Activated CD4-positive, alpha-beta T cell treated with anti-CD3 and anti-CD28 coated beads for 36 hours (primary cell): ENCODE measurements at regions of chr9 and their contacts with region 1.

Region 1: GRCh38 chr9:70639853-70640814 is 225.7 kb upstream of the KLF9 start:
- DNase-seq: no peak
- ATAC-seq: no peak
- H3K4me3 Mint-ChIP-seq: no peak overlapping the region
- H3K27ac Mint-ChIP-seq: no peak overlapping the region
- H3K4me1 Mint-ChIP-seq: no peaks in the 10 kb centered on the region
- H3K27me3 Mint-ChIP-seq: peaks cover 11% of the 10 kb centered on the region

Region 2: DNA sequence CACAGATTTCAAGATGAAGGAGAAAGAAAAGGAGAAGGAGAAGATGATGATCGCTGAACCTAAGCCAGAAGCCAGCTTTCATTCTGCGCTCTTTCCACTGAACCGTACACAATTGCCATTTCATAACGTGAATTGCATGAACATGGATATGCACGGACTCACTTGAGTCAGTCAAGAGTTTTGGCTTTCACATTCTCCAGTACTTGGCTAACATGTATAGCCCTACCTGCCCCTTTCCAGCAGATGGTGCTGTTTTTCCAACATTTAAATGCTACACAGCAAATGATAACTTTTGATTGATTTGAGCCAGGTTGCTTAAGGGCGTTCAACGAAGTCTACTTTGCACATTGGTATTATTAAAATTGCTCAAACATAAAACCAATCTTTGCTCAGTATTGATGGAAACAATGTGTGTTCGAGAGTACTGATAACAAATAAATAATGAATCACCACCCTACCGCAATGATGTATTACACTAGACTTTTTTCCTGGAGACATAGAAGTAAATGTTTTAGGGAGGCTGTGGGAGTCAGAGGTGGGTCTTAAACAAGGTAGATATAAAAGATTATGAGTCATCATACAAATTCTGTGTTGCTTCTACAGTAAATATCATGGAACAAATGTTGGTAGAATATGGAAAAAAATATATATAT is 284.9 kb after region 1 on chr9:
- CTCF ChIA-PET with region 1: interaction called, 3 read pairs
- POLR2A ChIA-PET with region 1: no interaction called
- intact Hi-C with region 1: loop called in 1 of 2 experiments (anchors 1 kb)
- DNase-seq: peak; percentile 24
- ATAC-seq: peak; percentile 66
- H3K4me3 Mint-ChIP-seq: no peak overlapping the region
- H3K27ac Mint-ChIP-seq: no peak overlapping the region
- H3K4me1 Mint-ChIP-seq: no peaks in the 10 kb centered on the region
- H3K27me3 Mint-ChIP-seq: no peaks in the 10 kb centered on the region

Region 3: DNA sequence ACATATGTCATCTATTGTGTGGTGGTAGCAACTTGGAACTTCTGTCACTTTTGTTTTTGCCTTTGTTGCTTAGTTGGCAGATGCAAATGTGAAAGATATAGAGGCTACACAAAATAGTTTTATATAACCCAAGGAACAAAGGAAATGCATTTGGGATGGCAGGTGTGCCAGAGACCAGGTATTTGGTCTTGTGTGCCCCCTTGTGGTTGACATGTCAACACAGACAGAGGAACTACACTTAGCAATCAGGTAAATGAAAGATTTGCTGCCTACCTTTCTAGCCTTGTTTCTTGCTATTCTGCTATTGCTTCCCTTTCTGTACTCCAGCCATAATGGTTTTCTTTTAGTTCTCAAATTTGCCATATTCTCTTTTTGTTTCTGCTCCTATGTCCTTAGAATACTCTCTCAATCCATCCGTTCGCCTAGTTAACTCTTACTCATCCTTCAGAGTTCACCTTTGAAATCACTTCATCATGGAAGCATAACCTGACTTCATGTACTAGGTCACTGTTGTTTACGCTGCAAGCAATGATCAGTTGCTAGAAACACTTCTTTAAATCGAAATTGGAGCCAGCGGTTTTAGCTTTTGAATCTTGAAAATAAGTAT is 361.7 kb after region 1 on chr9:
- CTCF ChIA-PET with region 1: interaction called, 5 read pairs
- POLR2A ChIA-PET with region 1: no interaction called
- intact Hi-C with region 1: loop called (anchors 1 to 5 kb)
- DNase-seq: peak; percentile 31
- ATAC-seq: no peak
- H3K4me3 Mint-ChIP-seq: no peak overlapping the region
- H3K27ac Mint-ChIP-seq: no peak overlapping the region
- H3K4me1 Mint-ChIP-seq: no peaks in the 10 kb centered on the region
- H3K27me3 Mint-ChIP-seq: peaks cover 3% of the 10 kb centered on the region

Region 4: DNA sequence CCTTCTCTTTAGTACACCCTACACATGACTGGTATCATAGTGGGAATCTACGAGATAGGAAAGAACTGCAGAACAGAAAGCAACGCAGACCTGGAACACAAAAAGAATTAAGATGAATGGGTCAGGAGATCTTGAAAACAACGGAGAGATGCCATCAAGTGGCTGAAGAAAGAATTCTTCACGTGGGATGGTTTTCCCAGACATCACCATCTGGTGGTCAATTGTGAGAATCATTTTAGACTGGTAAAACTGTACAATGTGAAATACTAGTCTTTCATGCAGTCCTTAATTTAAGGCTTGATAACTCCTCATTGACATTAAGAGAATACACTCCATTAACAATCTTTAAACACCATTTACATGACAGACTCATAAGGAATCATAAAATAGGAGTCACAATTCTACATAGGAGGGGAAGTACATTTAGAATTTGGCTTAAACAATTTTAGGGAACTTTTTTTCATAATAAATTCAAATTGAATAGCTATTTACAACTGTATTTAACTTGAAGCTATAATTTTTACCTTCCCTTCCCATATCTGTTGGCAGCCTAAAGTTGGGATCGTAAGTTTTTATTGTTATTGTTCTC is 609.7 kb after region 1 on chr9:
- CTCF ChIA-PET with region 1: interaction called, 8 read pairs
- POLR2A ChIA-PET with region 1: no interaction called
- intact Hi-C with region 1: loop called (anchors 1 to 10 kb)
- DNase-seq: no peak
- ATAC-seq: no peak
- H3K4me3 Mint-ChIP-seq: no peak overlapping the region
- H3K27ac Mint-ChIP-seq: no peak overlapping the region
- H3K4me1 Mint-ChIP-seq: no peaks in the 10 kb centered on the region
- H3K27me3 Mint-ChIP-seq: peaks cover 6% of the 10 kb centered on the region